Activated T-helper 2 cell treated with anti-CD3 and anti-CD28 coated beads, Interferon-gamma antibody, Interleukin-2, Interleukin-4, amounts not matched to agents 10 μg/mL and 5 μg/mL and 100 μg/mL, durations not matched to agents 14 hours and 24 hours and 36 hours (primary cell): ENCODE measurements at regions of chr16 and their contacts with region 1.

Region 1: DNA sequence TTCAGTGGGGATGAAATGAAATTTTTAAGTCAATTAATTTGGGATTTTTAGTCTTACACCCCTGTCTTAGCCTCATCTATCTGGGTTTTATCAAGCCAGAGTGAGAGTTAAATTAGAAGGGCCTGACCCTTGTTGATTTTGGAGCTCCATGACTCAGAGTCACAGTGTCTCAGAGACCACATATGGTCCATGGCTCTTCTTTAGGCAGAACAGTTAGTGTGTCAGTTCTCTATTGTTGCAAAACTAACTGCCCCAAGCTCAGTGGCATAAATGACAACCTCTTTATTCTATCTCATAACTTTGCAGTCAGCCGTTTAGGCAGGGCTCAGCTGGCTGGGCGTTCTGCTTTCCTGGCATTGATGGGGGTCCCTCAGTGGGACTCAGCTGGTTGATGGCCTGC is 44.7 kb downstream of the IRF8 start:
- DNase-seq: no peak
- H3K4me3 Mint-ChIP-seq: no peak overlapping the region
- H3K27ac Mint-ChIP-seq: peak overlapping the region; percentile 74
- H3K4me1 Mint-ChIP-seq: peaks cover 53% of the 10 kb centered on the region
- H3K27me3 Mint-ChIP-seq: peaks cover 10% of the 10 kb centered on the region

Region 2: GRCh38 chr16:85928401-85928820 is 15.3 kb before region 1 on chr16:
- intact Hi-C with region 1: loop called (anchors 2 kb)
- DNase-seq: no peak
- H3K4me3 Mint-ChIP-seq: no peak overlapping the region
- H3K27ac Mint-ChIP-seq: no peak overlapping the region
- H3K4me1 Mint-ChIP-seq: peaks cover 22% of the 10 kb centered on the region
- H3K27me3 Mint-ChIP-seq: peaks cover 3% of the 10 kb centered on the region

Region 3: GRCh38 chr16:86242244-86243122 is 298.8 kb after region 1 on chr16:
- intact Hi-C with region 1: no loop called
- DNase-seq: no peak
- H3K4me3 Mint-ChIP-seq: no peak overlapping the region
- H3K27ac Mint-ChIP-seq: no peak overlapping the region
- H3K4me1 Mint-ChIP-seq: no peaks in the 10 kb centered on the region
- H3K27me3 Mint-ChIP-seq: peaks cover 19% of the 10 kb centered on the region